ENCODE measurements at regions of chr4 and their contacts with region 1.

Region 1: DNA sequence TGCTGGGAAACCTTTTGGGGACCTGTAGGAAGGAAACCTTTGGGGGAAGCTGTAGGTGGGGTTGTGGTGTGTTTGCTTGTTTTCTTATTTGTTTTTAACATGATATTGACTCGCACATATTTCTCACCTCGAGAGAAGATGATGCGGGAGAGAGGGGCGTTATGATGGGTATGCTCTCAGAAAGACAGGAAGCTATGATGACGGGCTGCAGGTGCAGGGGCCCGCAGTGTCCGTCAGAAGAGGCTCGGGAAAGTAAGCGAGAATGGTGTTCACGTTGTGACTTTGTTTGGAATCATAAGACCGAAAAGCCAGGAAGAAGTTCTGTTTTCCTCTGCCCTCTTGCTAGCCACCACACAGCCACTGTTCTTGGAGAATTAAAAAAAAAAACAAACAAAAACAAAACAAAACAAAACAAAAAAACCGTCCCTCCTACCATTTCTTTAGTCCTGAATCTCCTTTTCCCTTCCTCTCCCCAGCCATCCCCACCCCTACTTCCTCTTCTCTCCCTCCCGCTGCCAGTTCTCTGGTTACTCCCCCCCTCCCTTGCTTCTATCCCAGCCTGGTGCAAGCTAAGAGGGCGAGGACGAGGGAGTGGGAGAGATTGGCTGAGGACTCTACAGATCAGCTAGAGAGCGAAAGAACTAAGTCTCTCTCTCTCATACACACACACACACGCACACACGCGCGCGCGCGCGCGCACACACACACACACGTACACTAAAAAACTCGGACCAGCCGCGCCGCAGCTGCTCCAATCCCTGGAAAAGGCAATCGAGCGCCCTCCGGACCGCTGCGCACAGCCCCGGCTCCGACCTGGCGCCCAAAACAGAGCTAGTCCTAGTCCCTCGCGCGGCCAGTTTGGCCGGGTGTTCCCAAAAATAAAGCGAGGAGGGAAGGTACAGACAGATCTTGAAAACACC is at the start of gene BMP3:
- DNase-seq: peak; percentile 20 to 48
- H3K4me3 ChIP-seq: peak within 1 kb of the TSS; percentile 63
- H3K27ac ChIP-seq: no peak within 1 kb of the TSS
- H3K4me1 ChIP-seq: 0 out of 2 replicates have a peak, but pooled peaks cover 6% of the 10 kb centered on the region
- H3K27me3 ChIP-seq: no peaks in the 10 kb centered on the region
- CTCF ChIP-seq: no peak
- total RNA-seq, gene BMP3: 0.41 and 0.50 TPM in 2 replicates

Region 2: GRCh38 chr4:80454040-80454439 is 576.3 kb before region 1 on chr4:
- CTCF ChIA-PET with region 1: no interaction called
- POLR2A ChIA-PET with region 1: no interaction called
- intact Hi-C with region 1: loop called (anchors 5 kb)
- DNase-seq: peak; percentile 24 to 88
- H3K4me3 ChIP-seq: peak overlapping the region; percentile 30; the same call in 1 of the 2 replicates
- H3K27ac ChIP-seq: peak overlapping the region; percentile 98
- H3K4me1 ChIP-seq: peaks cover 22% of the 10 kb centered on the region
- H3K27me3 ChIP-seq: no peaks in the 10 kb centered on the region
- CTCF ChIP-seq: no peak